ENCODE measurements at regions of chr7 and their contacts with region 1.

Region 1: DNA sequence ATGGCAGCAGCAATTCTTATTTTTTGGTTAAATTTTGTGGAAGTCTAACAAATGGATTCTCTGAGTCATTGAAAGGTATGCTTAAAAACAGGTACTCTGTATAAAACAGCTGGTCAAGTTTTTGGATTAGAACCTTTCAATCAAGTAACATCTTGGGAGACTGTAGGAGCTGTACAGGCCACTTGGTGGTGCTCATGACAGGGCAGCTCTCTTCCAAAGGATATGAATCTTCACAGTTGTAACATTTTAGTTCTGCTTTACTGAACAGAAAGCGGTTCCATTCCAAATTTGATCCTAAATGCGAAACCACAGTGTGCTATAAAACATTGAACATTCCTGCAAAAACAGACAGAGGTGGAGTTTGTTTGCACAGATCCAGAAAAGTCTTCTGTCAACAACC is 44.5 kb upstream of the AGR3 start:
- DNase-seq: peak; percentile 21
- ATAC-seq: peak; percentile 85
- H3K4me3 ChIP-seq: no peak overlapping the region
- H3K27ac ChIP-seq: no peak overlapping the region
- H3K4me1 ChIP-seq: no peaks in the 10 kb centered on the region
- H3K27me3 ChIP-seq: no peaks in the 10 kb centered on the region
- CTCF ChIP-seq: peak; percentile 36 to 75 (median 67); a peak in 5 of 6 replicates
- POLR2A ChIP-seq: no peak
- RAD21 ChIP-seq: peak; percentile 72

Region 2: DNA sequence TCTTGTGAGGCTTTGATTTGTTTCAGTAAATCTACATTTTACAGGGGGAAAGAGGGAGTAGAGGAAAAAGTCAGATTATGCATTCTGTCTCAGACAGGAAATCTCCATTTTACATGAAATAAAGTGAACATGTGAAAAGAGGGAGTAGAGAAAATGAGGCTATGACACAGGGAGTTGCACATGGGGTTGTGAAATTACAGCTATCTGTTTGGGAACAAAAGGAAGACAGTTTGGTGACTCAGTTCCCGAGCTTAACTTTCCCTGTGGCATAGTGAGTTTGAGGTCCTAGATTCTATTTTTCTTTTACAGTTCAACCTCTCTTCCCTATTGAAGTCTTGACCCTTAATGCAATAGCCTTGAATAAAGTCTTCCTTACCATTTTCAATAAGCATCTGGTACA is 18.7 kb after region 1 on chr7:
- CTCF ChIA-PET with region 1: no interaction called
- POLR2A ChIA-PET with region 1: no interaction called
- RAD21 ChIA-PET with region 1: no interaction called
- intact Hi-C with region 1: no loop called
- DNase-seq: no peak
- ATAC-seq: no peak
- H3K4me3 ChIP-seq: no peak overlapping the region
- H3K27ac ChIP-seq: no peak overlapping the region
- H3K4me1 ChIP-seq: no peaks in the 10 kb centered on the region
- H3K27me3 ChIP-seq: no peaks in the 10 kb centered on the region
- CTCF ChIP-seq: no peak
- POLR2A ChIP-seq: no peak
- RAD21 ChIP-seq: no peak

Region 3: GRCh38 chr7:17646253-17646956 is 720.1 kb after region 1 on chr7:
- CTCF ChIA-PET with region 1: interaction called, 9 read pairs
- POLR2A ChIA-PET with region 1: no interaction called
- RAD21 ChIA-PET with region 1: no interaction called
- intact Hi-C with region 1: loop called (anchors 1 kb)
- DNase-seq: no peak
- ATAC-seq: peak; percentile 47; the same call in 1 of the 2 replicates
- H3K4me3 ChIP-seq: no peak overlapping the region
- H3K27ac ChIP-seq: no peak overlapping the region
- H3K4me1 ChIP-seq: no peaks in the 10 kb centered on the region
- H3K27me3 ChIP-seq: no peaks in the 10 kb centered on the region
- CTCF ChIP-seq: peak in 2 of 3 experiments; percentile 33 to 44; a peak in 2 of 6 replicates
- POLR2A ChIP-seq: no peak
- RAD21 ChIP-seq: peak; percentile 67

Measured in HCT116 (cell line).